Activated CD4-positive, alpha-beta memory T cell treated with anti-CD3 and anti-CD28 coated beads for 36 hours (primary cell): ENCODE measurements at regions of chr1 and their contacts with region 1.

Region 1: DNA sequence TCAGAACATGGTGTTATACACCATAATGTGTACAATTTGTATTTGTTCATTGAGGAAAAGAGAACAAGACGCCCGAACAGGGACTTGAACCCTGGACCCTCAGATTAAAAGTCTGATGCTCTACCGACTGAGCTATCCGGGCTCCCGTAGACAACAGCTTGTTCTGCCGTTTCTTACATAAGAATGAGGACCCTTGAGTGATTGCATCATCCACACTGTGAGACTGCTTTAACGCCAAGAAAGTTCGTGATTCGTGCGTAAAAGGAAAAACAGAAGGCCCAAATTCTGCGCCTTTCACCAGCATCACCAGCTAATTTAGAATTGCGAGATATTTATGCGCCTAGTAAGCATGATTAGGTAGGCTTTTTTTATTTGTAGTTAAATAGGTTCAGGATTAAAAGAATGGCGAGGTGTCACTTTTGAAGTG is 9.2 kb upstream of the MDM4 start:
- DNase-seq: peak; percentile 93
- H3K4me3 Mint-ChIP-seq: peak overlapping the region; percentile 91
- H3K27ac Mint-ChIP-seq: peak overlapping the region; percentile 98
- H3K4me1 Mint-ChIP-seq: peaks cover 24% of the 10 kb centered on the region
- H3K27me3 Mint-ChIP-seq: peaks cover 4% of the 10 kb centered on the region

Region 2: DNA sequence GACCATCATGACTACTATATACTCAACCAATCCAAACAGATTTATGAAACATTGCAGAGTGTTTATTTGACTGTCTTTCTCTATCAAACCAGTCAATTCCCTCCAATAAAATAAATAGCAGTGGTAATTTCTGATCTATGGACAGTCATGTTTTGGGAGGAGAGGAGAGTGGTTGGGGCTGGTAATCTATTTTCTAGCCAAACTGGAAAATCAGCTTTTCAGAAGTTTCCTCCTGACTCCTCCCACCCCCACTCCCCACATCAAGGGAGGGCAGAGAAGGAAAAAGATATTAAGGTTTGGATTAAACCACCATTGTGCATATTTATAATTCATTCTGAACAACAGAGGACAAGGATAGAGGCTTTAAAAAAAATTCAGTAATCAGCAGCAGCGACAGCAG is 503.4 kb before region 1 on chr1:
- CTCF ChIA-PET with region 1: no interaction called
- POLR2A ChIA-PET with region 1: no interaction called
- intact Hi-C with region 1: no loop called
- DNase-seq: no peak
- H3K4me3 Mint-ChIP-seq: no peak overlapping the region
- H3K27ac Mint-ChIP-seq: no peak overlapping the region
- H3K4me1 Mint-ChIP-seq: peaks cover 5% of the 10 kb centered on the region
- H3K27me3 Mint-ChIP-seq: no peaks in the 10 kb centered on the region

Region 3: DNA sequence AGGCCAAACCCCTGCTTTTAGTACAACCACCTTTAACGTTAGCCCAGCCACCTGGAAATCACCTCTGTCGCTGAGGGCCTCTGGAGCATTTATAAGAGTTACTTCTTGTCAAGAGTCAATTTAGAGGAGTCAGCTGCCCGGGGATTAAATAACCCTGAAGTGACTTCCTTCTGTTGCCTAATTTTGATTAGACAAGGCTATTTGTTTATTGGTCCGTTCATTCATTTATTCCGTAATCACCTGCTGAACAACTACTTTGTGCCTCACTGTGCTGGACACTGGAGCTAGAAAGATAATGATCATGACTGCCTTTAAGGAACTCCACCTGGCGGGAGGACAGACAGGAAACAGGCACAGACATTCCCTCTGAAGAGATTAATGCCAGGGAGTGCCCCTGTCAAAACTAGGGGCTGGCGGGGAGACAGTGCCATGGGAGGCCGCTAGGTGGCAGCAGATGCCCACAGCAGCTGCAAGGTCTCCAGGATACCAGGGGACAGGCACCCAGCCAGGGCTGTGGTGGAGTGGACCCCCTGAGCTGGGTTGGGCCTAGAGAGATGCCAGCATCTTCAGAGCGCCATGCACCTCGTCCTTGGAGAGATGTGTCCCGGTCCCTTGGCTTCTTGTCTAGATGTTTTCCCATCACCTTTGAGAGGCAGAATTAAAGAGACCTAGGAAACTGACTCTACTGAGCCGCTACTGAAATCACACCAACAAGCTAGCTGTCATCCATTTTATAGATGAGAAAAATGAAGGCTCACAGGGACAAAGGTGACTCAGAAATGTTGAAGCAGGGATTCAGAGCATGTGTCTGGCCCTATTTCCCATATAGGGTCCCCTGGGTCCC is 344.5 kb before region 1 on chr1:
- CTCF ChIA-PET with region 1: interaction called, 5 read pairs
- POLR2A ChIA-PET with region 1: no interaction called
- intact Hi-C with region 1: loop called (anchors 2 kb)
- DNase-seq: peak; percentile 86
- H3K4me3 Mint-ChIP-seq: no peak overlapping the region
- H3K27ac Mint-ChIP-seq: no peak overlapping the region
- H3K4me1 Mint-ChIP-seq: no peaks in the 10 kb centered on the region
- H3K27me3 Mint-ChIP-seq: peaks cover 6% of the 10 kb centered on the region

Region 4: DNA sequence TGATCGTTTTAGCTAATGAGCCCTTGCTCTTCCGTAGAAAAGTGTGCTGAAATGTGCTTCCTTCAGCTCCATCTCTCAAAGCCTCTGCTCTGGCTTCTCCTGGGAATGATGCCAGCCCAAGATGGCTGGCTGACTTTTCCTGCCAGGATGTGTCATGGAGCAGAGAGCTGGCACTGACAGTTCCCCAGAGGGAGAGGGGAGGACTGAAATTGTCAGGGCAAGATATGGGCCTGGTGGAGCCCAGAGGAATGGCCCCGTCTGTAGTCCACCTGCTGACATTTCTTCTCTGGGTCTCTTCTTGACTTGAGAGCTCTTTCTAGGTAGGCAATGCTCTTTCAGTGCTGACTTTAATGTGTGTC is 122.0 kb before region 1 on chr1:
- CTCF ChIA-PET with region 1: no interaction called
- POLR2A ChIA-PET with region 1: no interaction called
- intact Hi-C with region 1: no loop called
- DNase-seq: no peak
- H3K4me3 Mint-ChIP-seq: no peak overlapping the region
- H3K27ac Mint-ChIP-seq: no peak overlapping the region
- H3K4me1 Mint-ChIP-seq: peaks cover 3% of the 10 kb centered on the region
- H3K27me3 Mint-ChIP-seq: no peaks in the 10 kb centered on the region

Region 5: DNA sequence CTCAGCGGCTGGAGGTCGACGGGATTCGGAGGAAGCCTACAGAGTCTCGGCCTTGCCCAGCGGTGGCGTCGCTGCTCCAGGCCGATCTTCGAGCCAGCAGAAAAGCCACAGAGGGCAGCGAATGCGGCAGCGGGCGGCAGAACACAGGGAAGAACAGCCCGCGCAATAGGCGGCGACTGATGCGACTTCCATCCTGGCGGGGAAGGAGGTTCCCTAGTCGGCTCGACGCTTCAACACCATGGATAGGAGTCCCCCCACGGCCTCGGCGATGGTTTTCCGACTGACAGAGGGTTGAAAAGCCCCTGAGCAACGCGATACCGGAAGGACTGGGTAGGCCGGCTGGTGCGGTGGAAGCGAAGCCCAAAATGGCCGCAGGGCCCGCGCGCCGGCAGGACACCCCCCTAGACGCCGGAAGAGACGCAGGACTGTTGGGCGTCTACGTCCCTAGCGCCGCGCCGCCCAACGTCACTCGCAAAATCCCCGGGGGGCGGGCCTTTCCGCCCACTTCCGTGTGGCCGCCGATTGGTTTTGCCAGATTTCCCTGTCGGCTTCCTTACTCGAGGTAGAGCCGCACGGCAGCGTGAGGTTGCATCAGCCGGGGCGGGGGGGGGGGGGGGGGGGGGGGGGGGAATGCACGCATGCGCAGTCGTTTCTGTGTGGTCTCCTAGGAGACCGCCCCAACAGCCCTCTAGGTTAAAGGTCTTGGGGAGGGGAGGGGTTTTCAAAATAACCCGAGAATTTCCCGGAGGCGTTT is 95.3 kb before region 1 on chr1 and contains the start of gene PPP1R15B:
- CTCF ChIA-PET with region 1: interaction called, 10 read pairs
- POLR2A ChIA-PET with region 1: interaction called, 3 read pairs
- intact Hi-C with region 1: loop called (anchors 1 kb)
- DNase-seq: peak; percentile 99
- H3K4me3 Mint-ChIP-seq: peak within 1 kb of the TSS; percentile 99
- H3K27ac Mint-ChIP-seq: peak within 1 kb of the TSS; percentile 98
- H3K4me1 Mint-ChIP-seq: peaks cover 12% of the 10 kb centered on the region
- H3K27me3 Mint-ChIP-seq: no peaks in the 10 kb centered on the region
- total RNA-seq, gene PPP1R15B: 54.9 to 57.1 TPM

Region 6: DNA sequence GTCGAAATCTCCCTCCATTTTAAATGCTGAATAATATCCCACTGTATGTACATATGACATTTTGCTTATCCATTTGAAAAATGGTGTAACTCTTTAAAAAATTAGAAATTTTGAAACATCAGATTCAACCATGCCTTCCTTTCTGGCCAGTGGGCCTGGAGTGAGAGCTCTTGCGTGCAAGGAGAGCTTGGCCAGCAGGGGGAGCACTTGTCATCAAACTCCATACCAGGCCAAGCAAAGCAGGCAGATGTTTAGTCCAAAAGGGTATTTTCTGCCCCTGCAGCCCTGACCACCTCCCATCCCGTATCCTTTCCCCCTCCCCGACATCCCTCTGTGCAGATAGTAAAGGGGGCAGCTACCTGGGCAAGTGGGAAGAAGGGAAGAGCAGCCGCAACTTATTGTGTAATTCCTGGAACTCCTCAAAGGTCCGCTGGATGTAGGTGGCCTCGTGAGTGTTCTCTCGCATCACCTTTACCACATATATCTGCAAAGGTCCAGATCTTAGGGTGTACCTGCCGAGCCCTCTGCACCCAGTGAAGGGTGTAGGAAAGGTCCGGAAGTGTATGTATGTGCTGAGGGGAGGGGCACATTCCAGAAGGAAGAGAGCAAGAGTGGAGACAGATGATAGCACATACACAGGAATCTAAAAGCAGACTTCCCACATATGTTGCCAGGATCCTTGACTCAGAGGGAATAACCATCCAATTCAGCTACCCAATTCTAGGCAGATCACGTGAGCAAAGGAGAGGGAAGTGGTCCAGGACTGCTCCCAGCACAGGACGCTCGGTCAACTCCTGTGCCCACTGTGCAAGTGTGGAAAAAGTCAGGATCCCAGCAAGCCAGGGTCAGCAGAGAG is 75.4 kb before region 1 on chr1:
- CTCF ChIA-PET with region 1: interaction called, 1,224 read pairs
- POLR2A ChIA-PET with region 1: interaction called, 3 read pairs
- intact Hi-C with region 1: loop called (anchors 1 kb)
- DNase-seq: peak; percentile 87
- H3K4me3 Mint-ChIP-seq: no peak overlapping the region
- H3K27ac Mint-ChIP-seq: no peak overlapping the region
- H3K4me1 Mint-ChIP-seq: peaks cover 8% of the 10 kb centered on the region
- H3K27me3 Mint-ChIP-seq: no peaks in the 10 kb centered on the region

Region 7: DNA sequence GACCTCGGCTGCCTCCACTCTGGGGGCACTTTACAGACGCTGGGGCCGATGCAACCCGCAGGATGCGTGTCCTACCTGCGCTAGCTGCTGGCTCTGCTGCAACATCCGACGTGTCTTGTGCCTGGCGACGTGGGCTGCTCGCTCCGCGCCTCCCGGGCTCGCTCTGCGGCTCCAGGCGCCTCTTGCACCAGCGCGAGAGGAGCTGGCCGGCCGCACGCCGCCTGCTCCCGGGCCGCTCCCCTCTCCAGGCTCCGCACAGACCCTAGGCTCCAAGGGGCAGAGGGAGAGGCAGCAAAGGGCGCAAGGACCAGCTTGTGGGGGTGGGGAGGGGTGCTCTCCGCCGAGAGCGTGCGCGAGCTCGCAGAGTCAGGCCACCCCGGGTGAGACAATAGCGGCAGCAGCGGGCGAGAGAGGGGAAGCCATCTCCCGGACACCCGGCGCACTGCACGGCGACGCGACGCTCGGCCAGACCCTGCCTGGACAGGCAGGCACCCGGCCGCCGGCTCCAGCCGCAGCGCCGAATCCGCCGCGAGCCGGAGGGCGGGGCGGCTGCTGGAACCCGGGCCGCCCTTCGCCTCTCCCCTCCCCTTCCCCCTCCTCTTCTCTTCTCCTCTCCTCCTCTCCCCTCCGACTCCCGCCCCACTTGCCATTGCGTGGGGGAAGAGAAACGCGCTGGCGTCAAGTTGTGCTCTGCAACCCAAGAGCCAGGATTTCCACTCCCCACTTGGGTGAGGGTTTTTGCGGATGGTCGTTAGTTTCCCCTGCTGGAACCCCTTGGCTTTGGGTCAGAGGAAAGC is 12.5 kb before region 1 on chr1 and contains the start of gene PIK3C2B:
- CTCF ChIA-PET with region 1: interaction called, 40 read pairs
- POLR2A ChIA-PET with region 1: interaction called, 24 read pairs
- intact Hi-C with region 1: loop called (anchors 1 kb)
- DNase-seq: peak; percentile 86
- H3K4me3 Mint-ChIP-seq: peak within 1 kb of the TSS; percentile 84
- H3K27ac Mint-ChIP-seq: peak within 1 kb of the TSS; percentile 92
- H3K4me1 Mint-ChIP-seq: peaks cover 50% of the 10 kb centered on the region
- H3K27me3 Mint-ChIP-seq: no peaks in the 10 kb centered on the region
- total RNA-seq, gene PIK3C2B: 43.4 to 46.4 TPM

Region 8: DNA sequence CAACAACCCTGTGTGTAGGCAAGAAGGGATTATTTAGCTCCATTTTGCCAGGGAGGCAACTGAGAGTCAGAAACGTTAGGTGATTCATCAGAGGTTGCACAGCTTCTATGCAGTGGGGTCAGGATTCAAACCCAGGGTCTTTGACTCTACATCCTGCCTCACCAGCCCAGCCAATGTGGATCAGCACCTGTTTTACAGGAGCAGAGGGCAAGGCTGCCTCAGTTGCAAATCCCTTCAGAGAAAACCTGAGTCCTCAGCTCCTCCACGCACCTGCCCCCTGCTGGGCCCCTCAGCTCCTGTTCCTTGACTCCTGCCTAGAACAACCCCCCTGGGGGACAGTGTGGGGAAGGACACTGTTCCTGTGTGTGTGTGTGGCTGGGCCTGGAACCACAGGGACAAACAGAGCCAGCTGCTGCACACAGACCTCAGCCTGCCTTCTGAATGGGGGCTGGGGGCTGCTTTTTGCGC is 117.0 kb after region 1 on chr1:
- CTCF ChIA-PET with region 1: no interaction called
- POLR2A ChIA-PET with region 1: no interaction called
- intact Hi-C with region 1: no loop called
- DNase-seq: peak; percentile 30
- H3K4me3 Mint-ChIP-seq: no peak overlapping the region
- H3K27ac Mint-ChIP-seq: no peak overlapping the region
- H3K4me1 Mint-ChIP-seq: no peaks in the 10 kb centered on the region
- H3K27me3 Mint-ChIP-seq: no peaks in the 10 kb centered on the region

Region 9: DNA sequence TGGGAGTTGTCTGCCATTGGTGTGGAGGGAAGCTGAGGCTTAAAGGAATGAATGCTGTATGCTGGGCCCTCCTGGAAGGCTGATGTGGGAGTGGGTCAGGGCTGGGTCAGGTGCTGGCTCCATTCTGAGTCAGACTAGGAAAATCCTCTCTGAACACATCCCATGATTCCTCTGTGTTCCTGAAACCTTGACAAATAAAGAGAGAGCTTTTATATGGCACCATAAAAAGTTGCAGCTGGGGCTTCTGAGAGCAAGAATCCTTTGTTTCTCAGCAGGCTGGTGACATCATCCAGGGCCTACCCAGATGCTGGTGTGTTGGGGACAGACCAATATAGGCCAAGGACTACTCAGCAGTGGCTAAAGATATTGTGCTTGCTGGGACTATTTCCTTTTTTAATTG is 335.9 kb after region 1 on chr1:
- CTCF ChIA-PET with region 1: no interaction called
- POLR2A ChIA-PET with region 1: no interaction called
- intact Hi-C with region 1: no loop called
- DNase-seq: no peak
- H3K4me3 Mint-ChIP-seq: no peak overlapping the region
- H3K27ac Mint-ChIP-seq: no peak overlapping the region
- H3K4me1 Mint-ChIP-seq: no peaks in the 10 kb centered on the region
- H3K27me3 Mint-ChIP-seq: peaks cover 8% of the 10 kb centered on the region